Heart right ventricle (tissue), 16 donors: ENCODE measurements at regions of chr13 and their contacts with region 1.

Region 1: GRCh38 chr13:50594276-50595051 is 249.0 kb downstream of the DLEU7 start:
- DNase-seq: no peak
- ATAC-seq: peak in 1 of 8 donors; percentile 11
- H3K4me3 ChIP-seq: peak overlapping the region in 1 of 10 donors; percentile 3
- H3K27ac ChIP-seq: peak overlapping the region in 5 of 10 donors; percentile 18 to 68 (median 56)
- H3K4me1 ChIP-seq: peaks cover 0 to 60% (median 46%) of the 10 kb centered on the region in 9 donors
- H3K27me3 ChIP-seq: no peaks in the 10 kb centered on the region
- CTCF ChIP-seq: no peak

Region 2: DNA sequence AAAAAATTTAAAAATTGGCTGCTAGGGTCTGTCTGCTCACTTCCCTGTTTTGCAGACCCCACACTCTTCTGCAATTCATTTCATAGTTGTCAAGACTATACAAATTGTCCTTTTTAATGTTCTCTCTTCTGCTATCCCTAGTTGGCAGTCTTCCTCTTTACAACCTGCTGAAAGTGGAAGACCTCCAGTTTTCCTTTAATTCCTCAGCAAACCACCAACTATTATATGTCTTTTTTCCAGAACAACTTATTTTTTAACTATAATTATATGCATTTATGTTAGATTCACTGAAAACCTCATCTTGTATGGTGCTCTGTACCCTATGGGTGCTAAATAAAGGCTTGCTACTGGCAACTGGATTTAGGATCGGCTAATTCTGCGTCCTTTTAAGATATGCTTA is 1099.8 kb before region 1 on chr13:
- intact Hi-C with region 1: no loop called
- DNase-seq: no peak
- ATAC-seq: no peak
- H3K4me3 ChIP-seq: peak overlapping the region; percentile 46 to 84 (median 70)
- H3K27ac ChIP-seq: peak overlapping the region in 9 of 10 donors; percentile 92 to 98 (median 95)
- H3K4me1 ChIP-seq: peaks cover 0 to 35% (median 9%) of the 10 kb centered on the region in 9 donors
- H3K27me3 ChIP-seq: no peaks in the 10 kb centered on the region
- CTCF ChIP-seq: peak in 1 of 9 donors; percentile 9

Region 3: DNA sequence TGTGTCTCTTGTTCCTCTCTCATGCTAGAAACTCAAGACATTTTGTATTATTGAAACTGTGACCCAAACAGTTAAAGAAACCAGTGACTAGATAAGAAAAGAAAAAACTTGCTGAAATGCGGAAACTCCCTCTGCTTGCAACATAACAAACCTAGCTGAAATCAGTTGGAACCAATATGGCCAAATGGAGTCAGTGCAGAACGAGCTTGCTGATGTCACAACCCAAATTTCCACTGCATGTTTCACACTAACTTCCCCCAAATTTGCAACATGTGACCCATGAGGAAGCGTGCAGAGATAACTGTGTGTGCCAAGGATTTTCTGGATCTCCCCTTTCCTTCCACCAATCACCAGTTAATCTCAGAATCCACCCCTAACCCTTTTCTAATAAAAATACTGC is 41.0 kb after region 1 on chr13:
- intact Hi-C with region 1: no loop called
- DNase-seq: peak in 1 of 2 donors; percentile 39
- ATAC-seq: peak; percentile 44 to 91 (median 83)
- H3K4me3 ChIP-seq: no peak overlapping the region
- H3K27ac ChIP-seq: peak overlapping the region in 6 of 10 donors; percentile 8 to 88 (median 30)
- H3K4me1 ChIP-seq: peaks cover 0 to 24% (median 0%) of the 10 kb centered on the region in 9 donors
- H3K27me3 ChIP-seq: no peaks in the 10 kb centered on the region
- CTCF ChIP-seq: no peak

Region 4: GRCh38 chr13:50676602-50677001 is 82.1 kb after region 1 on chr13:
- intact Hi-C with region 1: loop called in 3 of 10 experiments (anchors 5 to 10 kb)
- DNase-seq: no peak
- ATAC-seq: peak in 4 of 8 donors; percentile 25 to 53 (median 32)
- H3K4me3 ChIP-seq: no peak overlapping the region
- H3K27ac ChIP-seq: peak overlapping the region in 7 of 10 donors; percentile 3 to 48 (median 38)
- H3K4me1 ChIP-seq: peaks cover 0 to 45% (median 22%) of the 10 kb centered on the region in 9 donors
- H3K27me3 ChIP-seq: no peaks in the 10 kb centered on the region
- CTCF ChIP-seq: no peak

Region 5: DNA sequence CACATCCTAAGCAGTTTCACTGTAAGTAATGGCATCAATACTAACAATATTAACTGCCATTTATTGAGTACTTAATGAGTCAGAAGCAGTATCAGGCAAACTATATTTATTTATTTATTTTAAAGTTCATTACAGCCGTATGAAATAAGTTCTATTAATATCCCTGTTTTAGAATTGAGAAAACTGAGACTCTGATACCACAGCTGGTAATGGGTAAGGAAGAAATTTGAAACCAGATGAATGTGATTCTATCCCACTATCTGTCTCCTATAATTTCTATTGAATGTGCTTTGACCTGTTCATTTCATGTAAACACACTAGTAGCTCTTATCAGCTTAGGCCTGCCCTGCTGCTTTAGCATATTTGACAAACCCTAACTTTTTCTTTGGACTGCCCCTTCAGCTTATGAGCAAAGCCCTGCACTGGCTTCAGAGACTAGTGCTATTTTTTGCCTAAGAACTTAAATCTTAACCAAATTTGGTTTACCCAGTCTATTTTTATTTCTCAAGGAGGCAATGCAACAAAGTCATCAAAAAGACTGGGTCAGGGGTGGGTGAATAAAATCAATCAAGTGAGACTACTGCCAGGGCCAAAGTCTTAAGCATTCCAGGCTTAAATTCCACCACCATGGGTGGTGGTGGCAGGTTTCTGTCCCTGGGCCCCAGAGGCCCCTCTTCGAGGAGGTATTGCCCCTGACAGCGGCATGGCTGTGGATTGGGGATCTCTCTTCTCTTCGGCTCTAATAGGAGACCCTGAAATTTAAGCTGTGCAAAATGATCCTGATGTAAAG is 105.6 kb after region 1 on chr13:
- intact Hi-C with region 1: loop called in 2 of 10 experiments (anchors 5 to 10 kb)
- DNase-seq: no peak
- ATAC-seq: peak in 1 of 8 donors; percentile 21
- H3K4me3 ChIP-seq: no peak overlapping the region
- H3K27ac ChIP-seq: peak overlapping the region in 7 of 10 donors; percentile 3 to 67 (median 33)
- H3K4me1 ChIP-seq: peaks cover 0 to 53% (median 26%) of the 10 kb centered on the region in 9 donors
- H3K27me3 ChIP-seq: no peaks in the 10 kb centered on the region
- CTCF ChIP-seq: no peak